Common myeloid progenitor, CD34-positive (primary cell): ENCODE measurements at regions of chr15 and their contacts with region 1.

Region 1: DNA sequence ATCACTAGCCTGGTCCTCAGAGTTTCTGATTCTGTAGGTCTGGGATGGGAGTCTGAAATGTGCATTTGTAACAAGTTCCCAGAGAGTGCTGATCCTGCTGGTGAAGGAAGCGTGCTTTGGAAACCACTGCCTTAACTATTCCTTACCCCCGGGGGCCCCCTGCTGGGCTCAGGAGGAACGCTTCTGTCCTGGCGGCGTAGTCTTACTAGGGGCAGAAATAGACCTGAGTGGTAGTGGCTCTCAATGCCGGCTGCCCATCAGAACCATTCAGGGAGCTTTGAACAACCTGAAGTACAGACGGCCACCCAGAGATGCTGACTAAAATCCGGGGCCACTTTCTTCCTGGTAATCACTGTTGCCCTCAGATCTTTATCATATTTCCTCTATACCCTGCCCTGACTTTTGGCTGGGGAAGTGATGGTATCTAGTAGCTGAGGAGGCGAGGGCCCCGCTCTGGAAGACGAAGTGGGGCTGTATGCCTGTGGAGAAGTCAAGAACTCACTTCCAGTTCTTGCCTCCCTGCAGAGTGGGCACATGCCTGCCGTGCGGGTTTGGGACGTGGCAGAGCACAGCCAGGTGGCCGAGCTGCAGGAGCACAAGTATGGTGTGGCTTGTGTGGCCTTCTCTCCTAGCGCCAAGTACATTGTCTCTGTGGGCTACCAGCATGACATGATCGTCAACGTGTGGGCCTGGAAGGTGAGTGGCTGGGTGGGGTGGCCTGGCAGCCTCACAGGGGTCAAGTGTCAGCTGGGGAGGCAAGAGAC is 16.3 kb upstream of the JMJD7 start:
- DNase-seq: peak; percentile 81 to 86 (median 82)
- H3K4me3 ChIP-seq: no peak overlapping the region
- H3K27ac ChIP-seq: no peak overlapping the region
- H3K4me1 ChIP-seq: peaks cover 0 to 30% (median 24%) of the 10 kb centered on the region in 4 experiments
- H3K27me3 ChIP-seq: no peaks in the 10 kb centered on the region

Region 2: GRCh38 chr15:41577863-41578735 is 233.5 kb before region 1 on chr15:
- CTCF ChIA-PET with region 1: no interaction called
- POLR2A ChIA-PET with region 1: no interaction called
- DNase-seq: peak in 1 of 3 donors; percentile 9
- H3K4me3 ChIP-seq: no peak overlapping the region
- H3K27ac ChIP-seq: no peak overlapping the region
- H3K4me1 ChIP-seq: no peaks in the 10 kb centered on the region
- H3K27me3 ChIP-seq: no peaks in the 10 kb centered on the region

Region 3: GRCh38 chr15:41756198-41756597 is 55.4 kb before region 1 on chr15:
- CTCF ChIA-PET with region 1: interaction called, 28 read pairs
- POLR2A ChIA-PET with region 1: no interaction called
- DNase-seq: peak in 2 of 3 donors; percentile 46 to 59
- H3K4me3 ChIP-seq: no peak overlapping the region
- H3K27ac ChIP-seq: no peak overlapping the region
- H3K4me1 ChIP-seq: peaks cover 0 to 3% (median 0%) of the 10 kb centered on the region in 4 experiments
- H3K27me3 ChIP-seq: no peaks in the 10 kb centered on the region

Region 4: GRCh38 chr15:41782371-41783282 is 29.0 kb before region 1 on chr15:
- CTCF ChIA-PET with region 1: interaction called, 319 read pairs
- POLR2A ChIA-PET with region 1: no interaction called
- DNase-seq: peak in 2 of 3 donors; percentile 28 to 49
- H3K4me3 ChIP-seq: no peak overlapping the region
- H3K27ac ChIP-seq: no peak overlapping the region
- H3K4me1 ChIP-seq: peaks cover 0 to 36% (median 21%) of the 10 kb centered on the region in 4 experiments
- H3K27me3 ChIP-seq: no peaks in the 10 kb centered on the region

Region 5: GRCh38 chr15:41795996-41796856 is 15.4 kb before region 1 on chr15:
- CTCF ChIA-PET with region 1: interaction called, 46 read pairs
- POLR2A ChIA-PET with region 1: interaction called, 6 read pairs
- DNase-seq: peak in 1 of 3 donors; percentile 21
- H3K4me3 ChIP-seq: peak overlapping the region in 2 of 7 experiments; percentile 28 to 38
- H3K27ac ChIP-seq: no peak overlapping the region
- H3K4me1 ChIP-seq: peaks cover 4 to 48% (median 39%) of the 10 kb centered on the region in 4 experiments
- H3K27me3 ChIP-seq: no peaks in the 10 kb centered on the region

Region 6: DNA sequence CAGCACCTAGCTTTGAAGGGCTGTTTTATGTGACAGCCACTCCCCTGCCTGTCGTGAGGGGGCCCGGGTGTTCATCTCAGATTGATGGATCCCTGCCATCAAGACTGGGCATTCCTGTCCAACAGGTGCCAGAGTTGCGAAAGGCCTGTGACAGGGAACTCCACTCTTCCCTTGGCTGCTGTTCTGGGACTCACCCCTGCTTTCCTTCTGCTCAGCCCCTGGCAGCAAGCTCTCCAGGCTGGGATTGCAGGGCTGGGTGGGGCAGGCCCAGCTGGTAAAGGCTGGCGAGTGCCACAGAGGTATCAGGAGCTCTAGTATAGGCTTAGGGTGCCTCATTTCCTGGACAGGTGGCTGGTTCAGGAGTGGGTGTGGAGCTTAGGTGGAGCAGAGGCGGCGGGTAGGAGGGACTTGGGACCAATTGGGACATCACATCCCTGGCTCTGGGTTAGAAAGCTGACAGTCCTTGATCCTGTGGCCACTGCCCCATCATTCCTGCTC is 26.8 kb after region 1 on chr15 and contains the start of gene PLA2G4B:
- CTCF ChIA-PET with region 1: no interaction called
- POLR2A ChIA-PET with region 1: no interaction called
- DNase-seq: no peak
- H3K4me3 ChIP-seq: no peak within 1 kb of the TSS
- H3K27ac ChIP-seq: no peak within 1 kb of the TSS
- H3K4me1 ChIP-seq: peaks cover 0 to 6% (median under 1%) of the 10 kb centered on the region in 4 experiments
- H3K27me3 ChIP-seq: no peaks in the 10 kb centered on the region

Region 7: DNA sequence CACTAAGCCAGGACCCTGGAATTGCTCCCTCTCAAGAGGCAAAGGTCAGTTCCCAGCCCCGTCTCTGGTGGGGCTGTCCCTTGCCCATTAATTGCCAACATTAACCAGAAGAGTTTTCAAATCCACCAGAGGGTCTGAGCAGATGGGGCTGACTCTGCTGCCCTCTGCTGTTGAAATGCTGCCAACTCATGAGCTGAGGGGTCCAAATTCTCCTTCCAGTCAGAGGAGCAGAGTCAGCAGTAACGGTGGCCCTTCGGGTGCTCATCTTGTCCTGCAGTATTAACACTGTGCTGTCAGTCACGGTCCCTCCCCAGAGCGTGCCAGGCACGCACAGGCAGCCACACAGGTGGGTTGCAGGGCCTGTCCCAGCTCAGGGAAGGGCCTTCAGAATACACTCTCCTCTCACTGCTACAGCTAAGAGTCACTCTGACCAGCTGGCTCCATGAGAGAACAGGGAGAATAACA is 93.0 kb after region 1 on chr15:
- CTCF ChIA-PET with region 1: interaction called, 48 read pairs
- POLR2A ChIA-PET with region 1: no interaction called
- DNase-seq: peak; percentile 64 to 82 (median 70)
- H3K4me3 ChIP-seq: no peak overlapping the region
- H3K27ac ChIP-seq: no peak overlapping the region
- H3K4me1 ChIP-seq: peaks cover 0 to 26% (median 10%) of the 10 kb centered on the region in 4 experiments
- H3K27me3 ChIP-seq: no peaks in the 10 kb centered on the region

Region 8: GRCh38 chr15:42065033-42065432 is 253.4 kb after region 1 on chr15:
- CTCF ChIA-PET with region 1: no interaction called
- POLR2A ChIA-PET with region 1: no interaction called
- DNase-seq: peak in 2 of 3 donors; percentile 20 to 33
- H3K4me3 ChIP-seq: no peak overlapping the region
- H3K27ac ChIP-seq: no peak overlapping the region
- H3K4me1 ChIP-seq: peaks cover 0 to 19% (median 14%) of the 10 kb centered on the region in 4 experiments
- H3K27me3 ChIP-seq: peaks cover 0 to 3% (median 0%) of the 10 kb centered on the region in 5 experiments